CD8-positive, alpha-beta memory T cell (primary cell): ENCODE measurements at regions of chr1 and their contacts with region 1.

Region 1: DNA sequence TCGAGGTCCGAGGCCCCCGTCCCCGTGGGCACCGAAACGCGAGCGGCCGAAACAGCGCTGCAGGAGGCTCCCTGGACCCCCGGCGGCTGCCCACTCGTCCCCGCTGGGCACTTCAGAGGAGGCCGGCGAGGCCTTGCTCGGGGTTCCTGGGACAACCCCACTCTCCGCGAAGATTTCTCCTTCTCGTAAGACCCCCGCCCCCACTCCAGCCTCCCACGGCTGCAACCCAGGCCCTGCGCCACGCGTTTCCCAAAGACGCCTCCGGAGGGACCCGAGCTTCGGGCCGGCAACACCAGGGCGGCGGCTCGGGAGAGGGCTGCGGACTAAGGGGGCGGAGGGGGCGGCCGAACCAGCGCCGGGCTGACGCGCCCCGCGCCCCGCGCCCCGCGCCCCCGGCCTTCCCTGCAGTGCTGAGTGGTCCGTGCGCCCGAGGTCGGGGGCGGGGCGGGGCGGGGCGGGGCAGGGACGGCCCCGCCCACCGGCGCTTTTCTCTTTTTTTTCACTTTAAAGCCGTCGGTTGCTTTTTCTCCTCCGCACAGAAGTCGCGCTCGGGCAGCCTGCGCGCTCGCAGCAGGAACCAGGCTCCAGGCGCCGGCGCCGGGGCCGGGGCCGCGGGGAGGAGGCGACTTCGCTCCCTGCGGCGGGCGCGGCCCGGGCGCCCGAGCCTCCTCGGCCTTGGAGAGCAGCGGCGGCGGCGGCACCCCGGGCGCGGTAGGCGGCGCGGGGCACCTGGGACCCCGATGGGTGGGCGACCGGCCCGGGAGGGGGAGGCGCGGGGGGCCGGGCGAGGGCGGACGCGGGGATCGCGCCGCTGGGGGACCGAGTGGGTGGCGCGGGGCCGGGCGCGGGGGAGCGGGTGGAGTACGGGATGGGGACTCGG is at the start of gene SPSB1:
- DNase-seq: peak; percentile 36 to 70 (median 51)
- H3K4me3 ChIP-seq: peak within 1 kb of the TSS; percentile 66
- H3K4me3 Mint-ChIP-seq: peak within 1 kb of the TSS; percentile 64 to 87 (median 79)
- H3K27ac ChIP-seq: no peak within 1 kb of the TSS
- H3K27ac Mint-ChIP-seq: peak within 1 kb of the TSS in 2 of 8 donors; percentile 36 to 43
- H3K4me1 ChIP-seq: peaks cover 26% of the 10 kb centered on the region
- H3K4me1 Mint-ChIP-seq: peaks cover 4 to 25% (median 13%) of the 10 kb centered on the region in 3 donors
- H3K27me3 ChIP-seq: no peaks in the 10 kb centered on the region
- H3K27me3 Mint-ChIP-seq: peaks cover 0 to 2% of the 10 kb centered on the region in 2 donors
- total RNA-seq, gene SPSB1: 0.92 to 1.2 TPM

Region 2: DNA sequence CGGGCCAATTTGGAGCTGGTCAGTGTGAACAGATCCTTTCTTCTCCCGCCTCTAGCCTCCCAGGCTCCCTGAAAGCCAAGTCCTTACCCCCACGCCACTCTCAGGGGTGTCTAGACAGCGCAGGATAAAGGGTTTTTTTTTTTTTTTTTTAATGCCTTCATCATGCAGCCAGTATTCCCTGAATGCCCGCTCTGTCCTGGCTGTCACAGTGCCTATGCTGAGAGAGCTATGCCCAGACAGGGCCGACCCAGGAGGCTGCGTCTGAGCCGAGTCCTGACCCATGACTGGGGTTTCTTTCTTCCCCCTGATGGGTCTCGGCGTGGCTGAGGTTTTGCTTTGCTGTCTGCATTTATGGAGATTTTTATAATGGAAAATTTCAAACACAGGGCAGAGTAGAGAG is 18.4 kb after region 1 on chr1:
- CTCF ChIA-PET with region 1: no interaction called
- POLR2A ChIA-PET with region 1: no interaction called
- DNase-seq: no peak
- H3K4me3 ChIP-seq: no peak overlapping the region
- H3K4me3 Mint-ChIP-seq: no peak overlapping the region
- H3K27ac ChIP-seq: no peak overlapping the region
- H3K27ac Mint-ChIP-seq: no peak overlapping the region
- H3K4me1 ChIP-seq: no peaks in the 10 kb centered on the region
- H3K4me1 Mint-ChIP-seq: peaks cover 10 to 18% (median 18%) of the 10 kb centered on the region in 3 donors
- H3K27me3 ChIP-seq: no peaks in the 10 kb centered on the region
- H3K27me3 Mint-ChIP-seq: no peaks in the 10 kb centered on the region

Region 3: GRCh38 chr1:9449976-9450691 is 157.5 kb after region 1 on chr1:
- CTCF ChIA-PET with region 1: interaction called, 51 read pairs
- POLR2A ChIA-PET with region 1: interaction called, 3 read pairs
- DNase-seq: no peak
- H3K4me3 ChIP-seq: no peak overlapping the region
- H3K4me3 Mint-ChIP-seq: no peak overlapping the region
- H3K27ac ChIP-seq: no peak overlapping the region
- H3K27ac Mint-ChIP-seq: no peak overlapping the region
- H3K4me1 ChIP-seq: no peaks in the 10 kb centered on the region
- H3K4me1 Mint-ChIP-seq: no peaks in the 10 kb centered on the region
- H3K27me3 ChIP-seq: no peaks in the 10 kb centered on the region
- H3K27me3 Mint-ChIP-seq: peaks cover 9 to 12% of the 10 kb centered on the region in 2 donors

Region 4: DNA sequence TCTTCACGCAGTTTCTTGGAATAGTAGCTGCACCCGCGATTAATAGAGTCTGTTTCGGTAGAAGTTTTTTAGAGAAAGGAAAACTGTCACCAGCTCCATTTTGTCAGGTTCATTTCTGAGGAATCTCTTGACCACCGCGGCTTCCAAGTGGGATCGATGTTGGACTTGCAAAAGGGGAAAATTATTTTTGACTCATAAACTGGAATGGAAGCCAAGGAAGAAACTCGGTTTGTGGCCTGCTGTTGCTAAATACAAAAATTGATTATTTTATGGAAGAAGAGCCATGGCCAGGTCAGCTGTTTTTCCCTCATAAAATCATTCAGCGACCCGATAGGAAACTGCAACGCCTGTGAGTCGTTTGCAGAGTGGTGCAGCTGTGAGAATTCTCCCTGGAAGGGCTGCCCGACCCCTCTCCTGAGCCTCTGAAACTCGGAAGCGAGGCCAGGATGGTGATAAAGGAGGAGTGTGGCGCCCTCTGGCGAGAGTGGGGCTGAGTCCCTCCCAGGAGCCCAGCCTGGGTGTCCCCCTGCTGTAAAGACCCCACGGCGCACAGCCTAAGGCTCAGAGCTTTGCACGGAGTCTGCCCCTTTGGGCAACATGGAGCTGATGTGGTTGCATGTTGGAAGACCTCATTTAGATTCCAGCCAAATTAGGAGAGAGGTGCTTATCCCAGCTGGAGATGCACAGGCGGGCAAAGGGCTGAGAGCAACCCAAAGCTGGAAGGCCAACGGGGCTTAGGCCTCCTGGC is 163.1 kb after region 1 on chr1:
- CTCF ChIA-PET with region 1: interaction called, 51 read pairs
- POLR2A ChIA-PET with region 1: interaction called, 3 read pairs
- DNase-seq: peak; percentile 41 to 67 (median 44)
- H3K4me3 ChIP-seq: no peak overlapping the region
- H3K4me3 Mint-ChIP-seq: no peak overlapping the region
- H3K27ac ChIP-seq: no peak overlapping the region
- H3K27ac Mint-ChIP-seq: no peak overlapping the region
- H3K4me1 ChIP-seq: no peaks in the 10 kb centered on the region
- H3K4me1 Mint-ChIP-seq: no peaks in the 10 kb centered on the region
- H3K27me3 ChIP-seq: no peaks in the 10 kb centered on the region
- H3K27me3 Mint-ChIP-seq: peaks cover 3 to 13% of the 10 kb centered on the region in 2 donors